ENCODE measurements at regions of chr6 and their contacts with region 1.

Region 1: DNA sequence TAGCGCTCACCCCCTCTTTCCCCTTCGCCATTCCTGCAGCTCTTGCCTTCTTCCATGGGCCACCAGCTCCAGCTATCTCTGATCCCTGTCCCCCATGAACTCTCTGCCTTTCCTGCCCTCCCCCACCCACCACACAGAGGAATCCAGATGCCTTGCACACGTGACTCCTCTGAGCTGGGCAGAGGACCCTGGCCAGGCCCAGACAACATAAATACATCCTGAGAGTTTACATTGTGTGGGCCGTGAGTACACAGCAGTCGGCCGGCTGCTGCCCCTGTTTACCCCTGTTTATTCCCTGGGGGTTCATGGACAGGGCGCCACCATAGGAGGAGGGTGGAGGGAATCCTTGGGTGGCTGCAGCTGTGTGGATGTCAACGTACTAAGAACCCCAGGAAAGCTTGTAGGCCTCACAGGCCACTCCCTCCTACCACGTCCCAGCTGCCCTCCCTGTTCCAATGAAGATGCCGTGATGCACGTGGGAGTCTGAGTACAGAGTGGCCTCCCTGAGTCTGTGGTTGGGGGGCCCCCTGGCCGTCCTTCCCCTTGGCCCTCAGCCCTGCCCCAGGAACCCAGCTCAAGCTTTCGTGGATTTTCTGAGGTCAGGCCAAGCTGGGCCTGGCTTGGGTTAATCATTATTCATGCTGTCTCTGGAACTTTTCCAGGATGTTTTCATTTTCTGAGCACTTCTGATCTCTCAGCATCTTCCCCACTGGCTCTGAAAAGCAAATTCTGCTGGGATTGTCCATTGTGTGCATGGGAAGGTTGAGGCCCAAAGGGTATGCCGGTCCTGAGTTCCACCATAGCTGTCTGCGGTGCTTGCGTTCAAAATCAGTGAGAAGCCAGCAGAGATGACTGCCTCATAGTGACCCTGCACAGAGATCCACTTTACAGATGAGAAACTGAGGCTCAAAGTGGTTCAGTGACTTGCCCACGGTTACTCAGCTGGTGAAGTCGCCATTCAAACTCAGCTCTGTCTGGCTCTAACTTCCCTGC is 136.3 kb downstream of the MRPL14 start:
- DNase-seq: no peak
- H3K4me3 ChIP-seq: no peak overlapping the region
- H3K27ac ChIP-seq: peak overlapping the region in 1 of 2 donors; percentile 67
- H3K4me1 ChIP-seq: peaks cover 6 to 20% of the 10 kb centered on the region in 2 donors
- H3K27me3 ChIP-seq: no peaks in the 10 kb centered on the region
- CTCF ChIP-seq: no peak

Region 2: DNA sequence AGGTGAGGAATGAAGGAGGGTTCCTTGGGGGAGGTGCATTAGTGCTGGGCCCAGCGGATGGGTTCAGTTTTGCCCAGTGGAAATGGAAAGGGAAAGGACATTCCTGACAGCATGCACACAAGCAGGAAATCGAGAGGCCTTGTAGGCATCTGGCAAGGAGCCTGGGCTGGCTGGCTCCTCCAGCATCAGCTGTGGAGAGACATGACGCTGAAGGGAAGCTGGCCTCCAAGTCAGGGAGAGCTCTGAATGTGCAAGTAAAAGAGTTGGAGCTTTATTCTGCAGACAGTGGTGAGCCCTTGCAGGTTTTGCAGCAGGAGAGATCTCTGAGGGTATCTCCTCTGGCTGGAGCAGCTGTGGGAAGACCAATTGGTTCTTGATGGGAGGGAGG is 18.0 kb before region 1 on chr6:
- intact Hi-C with region 1: loop called (anchors 2 kb)
- DNase-seq: peak; percentile 52 to 88
- H3K4me3 ChIP-seq: no peak overlapping the region
- H3K27ac ChIP-seq: peak overlapping the region; percentile 75 to 87
- H3K4me1 ChIP-seq: peaks cover 0 to 17% of the 10 kb centered on the region in 2 donors
- H3K27me3 ChIP-seq: no peaks in the 10 kb centered on the region
- CTCF ChIP-seq: no peak

Region 3: DNA sequence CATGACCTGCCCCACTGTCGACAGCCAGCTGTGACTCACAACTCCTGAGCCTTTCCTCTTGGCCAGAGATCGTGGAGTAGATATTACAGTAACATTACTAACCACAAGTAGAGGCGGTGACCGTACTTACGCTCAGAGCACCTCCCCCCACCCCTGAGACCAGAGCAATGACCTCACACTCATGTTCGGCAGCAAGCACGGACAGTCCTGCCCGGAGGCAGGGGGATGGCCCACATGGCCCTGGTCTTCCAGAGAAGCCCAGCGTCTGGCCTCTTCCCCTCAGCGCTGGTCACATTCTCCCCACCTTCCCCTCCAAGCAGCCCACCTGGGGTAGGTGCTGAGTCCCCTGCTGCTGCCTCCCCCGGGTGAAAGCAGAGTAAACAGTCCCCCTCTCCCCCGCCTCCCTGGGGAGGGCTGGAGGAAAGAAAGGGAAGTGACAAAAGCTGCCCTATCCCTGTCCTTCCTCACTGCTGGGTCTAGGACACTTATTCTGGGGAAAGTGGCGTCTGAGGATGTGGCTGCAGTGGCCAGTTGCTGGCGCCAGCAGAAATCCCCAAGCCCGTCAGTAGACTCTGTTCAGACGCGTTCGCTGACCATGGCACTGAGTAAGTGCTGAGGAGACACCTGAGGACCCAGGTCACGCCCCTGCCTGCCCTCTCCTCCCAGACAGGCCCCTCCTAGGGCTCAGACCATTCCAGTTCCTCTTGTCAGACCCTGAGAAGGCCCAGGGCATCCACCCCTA is 67.9 kb after region 1 on chr6:
- intact Hi-C with region 1: loop called (anchors 5 kb)
- DNase-seq: peak; percentile 90 to 96
- H3K4me3 ChIP-seq: peak overlapping the region in 1 of 2 donors; percentile 14
- H3K27ac ChIP-seq: peak overlapping the region; percentile 86 to 91
- H3K4me1 ChIP-seq: peaks cover 29 to 42% of the 10 kb centered on the region in 2 donors
- H3K27me3 ChIP-seq: no peaks in the 10 kb centered on the region
- CTCF ChIP-seq: no peak